Right cardiac atrium (tissue), 5 donors: ENCODE measurements at regions of chr15 and their contacts with region 1.

Region 1: GRCh38 chr15:90059208-90059985 is 42.9 kb downstream of the IDH2 start:
- DNase-seq: peak; percentile 76 to 92 (median 88)
- ATAC-seq: peak; percentile 61 to 66
- H3K4me3 ChIP-seq: no peak overlapping the region
- H3K27ac ChIP-seq: peak overlapping the region; percentile 40
- H3K4me1 ChIP-seq: peaks cover 10% of the 10 kb centered on the region
- H3K27me3 ChIP-seq: no peaks in the 10 kb centered on the region

Region 2: DNA sequence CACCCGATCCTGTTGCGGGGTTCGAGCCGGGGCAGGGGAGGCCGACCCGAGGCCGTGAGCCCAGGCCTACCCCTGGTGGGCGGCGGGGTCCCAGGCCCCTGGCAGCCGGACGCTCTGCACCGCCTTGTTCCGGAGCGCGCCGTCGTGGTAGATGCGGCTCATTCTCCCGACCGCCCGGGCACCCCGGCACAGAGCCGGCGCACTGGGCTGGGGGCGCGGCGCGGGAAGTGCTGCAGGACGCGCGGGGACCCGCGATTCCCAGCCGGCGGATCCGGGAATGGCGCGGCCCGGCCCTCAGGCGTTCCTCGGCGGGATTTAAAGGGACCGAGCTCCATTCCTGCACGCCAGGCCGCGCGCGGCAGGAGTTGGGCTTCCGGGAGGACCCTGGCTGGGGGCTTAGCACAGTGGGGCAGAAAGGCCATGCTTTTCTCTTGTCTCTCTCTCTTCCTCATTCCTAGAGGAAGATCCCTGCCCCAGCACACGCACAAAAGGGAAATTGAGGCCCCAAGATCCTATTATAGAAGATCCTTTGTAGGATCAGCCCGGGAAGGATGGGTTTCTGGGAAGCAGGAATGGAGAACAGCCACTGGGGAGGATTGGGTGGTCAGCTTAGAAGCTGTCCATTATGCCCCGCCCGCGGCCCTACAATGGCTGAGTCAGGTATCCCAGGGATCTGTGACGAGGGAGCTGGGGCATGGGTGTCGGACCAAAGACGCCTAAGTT is 146.6 kb before region 1 on chr15 and contains the start of gene ARPIN:
- intact Hi-C with region 1: loop called in 1 of 4 experiments (anchors 10 kb)
- DNase-seq: peak; percentile 73 to 87 (median 87)
- ATAC-seq: peak; percentile 91 to 92
- H3K4me3 ChIP-seq: peak within 1 kb of the TSS; percentile 72
- H3K27ac ChIP-seq: peak within 1 kb of the TSS; percentile 22
- H3K4me1 ChIP-seq: no peaks in the 10 kb centered on the region
- H3K27me3 ChIP-seq: no peaks in the 10 kb centered on the region
- total RNA-seq, gene ARPIN: 12.3 to 16.0 (median 13.1) TPM

Region 3: DNA sequence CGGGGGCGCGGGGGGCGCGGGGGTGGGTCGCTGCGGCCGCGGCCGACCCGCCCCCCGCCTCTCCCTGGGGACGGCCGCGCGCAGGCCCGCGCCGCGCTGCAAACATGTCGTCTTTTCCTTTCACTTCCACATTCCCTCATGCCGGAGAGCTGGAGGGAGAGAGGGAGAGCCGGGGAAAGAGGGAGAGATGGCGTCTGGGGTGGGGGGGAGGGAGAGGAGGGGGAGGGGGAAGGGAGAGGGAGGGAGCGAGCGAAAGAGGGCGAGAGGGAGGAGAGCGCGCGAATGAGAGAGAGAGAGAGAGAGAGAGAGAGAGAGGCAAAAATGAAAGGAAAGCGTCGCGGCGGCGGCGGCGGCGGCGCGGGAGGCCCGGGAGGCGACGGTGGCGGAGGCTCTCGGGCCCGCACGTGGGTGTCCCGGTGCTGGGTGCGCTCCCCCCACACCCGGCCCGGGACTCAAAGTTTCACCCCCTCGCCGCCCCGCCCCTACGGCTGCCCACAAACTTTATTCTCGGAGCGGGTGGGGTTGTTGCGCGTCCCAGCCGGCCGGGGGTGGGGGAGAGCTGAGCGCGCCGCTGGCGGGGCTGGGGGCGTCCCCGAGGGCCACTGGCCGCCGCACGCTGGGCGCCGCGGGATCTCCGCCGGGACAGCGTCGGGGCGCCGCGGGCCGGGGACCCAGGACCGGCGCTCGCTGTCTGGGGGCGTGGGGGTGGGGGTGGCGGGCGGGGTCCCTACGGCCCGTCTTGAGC is 57.5 kb before region 1 on chr15:
- intact Hi-C with region 1: loop called in 3 of 4 experiments (anchors 10 kb)
- DNase-seq: peak; percentile 67 to 87 (median 87)
- ATAC-seq: peak; percentile 35 to 45
- H3K4me3 ChIP-seq: peak overlapping the region; percentile 97
- H3K27ac ChIP-seq: peak overlapping the region; percentile 82
- H3K4me1 ChIP-seq: peaks cover 15% of the 10 kb centered on the region
- H3K27me3 ChIP-seq: no peaks in the 10 kb centered on the region